ENCODE measurements at regions of chr12 and their contacts with region 1.

Region 1: GRCh38 chr12:107670999-107671643 is 14.5 kb upstream of the PWP1 start:
- DNase-seq: peak; percentile 35
- H3K4me3 ChIP-seq: no peak overlapping the region
- H3K27ac ChIP-seq: no peak overlapping the region
- H3K4me1 ChIP-seq: no peaks in the 10 kb centered on the region
- H3K27me3 ChIP-seq: peaks cover 2 to 6% of the 10 kb centered on the region in 2 experiments
- CTCF ChIP-seq: peak; percentile 72 to 88
- POLR2A ChIP-seq: no peak

Region 2: DNA sequence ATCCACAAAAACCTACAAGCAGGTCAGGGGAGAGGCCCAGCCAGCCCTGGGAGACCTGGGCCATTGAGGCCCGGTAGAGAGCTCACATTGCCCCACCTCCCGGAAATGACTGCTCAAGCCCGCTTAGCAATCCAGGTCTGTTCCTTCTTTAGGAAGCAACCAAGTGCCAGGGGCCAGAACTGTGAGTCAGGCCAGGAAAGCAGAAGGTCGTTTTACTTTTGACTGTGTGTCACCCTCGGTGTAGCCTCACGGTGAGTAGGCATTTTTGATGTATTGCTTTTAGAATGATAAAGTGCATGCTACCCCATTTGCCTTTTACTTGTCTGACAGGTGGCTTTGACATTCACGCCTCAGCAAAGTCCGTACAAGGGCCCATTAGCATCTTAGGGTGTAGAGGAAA is 10.9 kb before region 1 on chr12:
- CTCF ChIA-PET with region 1: interaction called, 16 read pairs
- POLR2A ChIA-PET with region 1: no interaction called
- dilution Hi-C with region 1: no loop called
- intact Hi-C with region 1: no loop called
- DNase-seq: no peak
- H3K4me3 ChIP-seq: no peak overlapping the region
- H3K27ac ChIP-seq: no peak overlapping the region
- H3K4me1 ChIP-seq: peaks cover 4% of the 10 kb centered on the region
- H3K27me3 ChIP-seq: no peaks in the 10 kb centered on the region
- CTCF ChIP-seq: no peak
- POLR2A ChIP-seq: no peak

Region 3: GRCh38 chr12:107685360-107686248 is 14.5 kb after region 1 on chr12 and contains the start of gene PWP1:
- CTCF ChIA-PET with region 1: interaction called, 11 read pairs
- POLR2A ChIA-PET with region 1: no interaction called
- dilution Hi-C with region 1: no loop called
- intact Hi-C with region 1: no loop called
- DNase-seq: peak; percentile 97
- H3K4me3 ChIP-seq: peak within 1 kb of the TSS; percentile 28 to 80 (median 67)
- H3K27ac ChIP-seq: peak within 1 kb of the TSS; percentile 51
- H3K4me1 ChIP-seq: peaks cover 7% of the 10 kb centered on the region
- H3K27me3 ChIP-seq: no peaks in the 10 kb centered on the region
- CTCF ChIP-seq: no peak
- POLR2A ChIP-seq: peak; percentile 74
- total RNA-seq, gene PWP1: 68.6 and 70.8 TPM in 2 replicates

Region 4: DNA sequence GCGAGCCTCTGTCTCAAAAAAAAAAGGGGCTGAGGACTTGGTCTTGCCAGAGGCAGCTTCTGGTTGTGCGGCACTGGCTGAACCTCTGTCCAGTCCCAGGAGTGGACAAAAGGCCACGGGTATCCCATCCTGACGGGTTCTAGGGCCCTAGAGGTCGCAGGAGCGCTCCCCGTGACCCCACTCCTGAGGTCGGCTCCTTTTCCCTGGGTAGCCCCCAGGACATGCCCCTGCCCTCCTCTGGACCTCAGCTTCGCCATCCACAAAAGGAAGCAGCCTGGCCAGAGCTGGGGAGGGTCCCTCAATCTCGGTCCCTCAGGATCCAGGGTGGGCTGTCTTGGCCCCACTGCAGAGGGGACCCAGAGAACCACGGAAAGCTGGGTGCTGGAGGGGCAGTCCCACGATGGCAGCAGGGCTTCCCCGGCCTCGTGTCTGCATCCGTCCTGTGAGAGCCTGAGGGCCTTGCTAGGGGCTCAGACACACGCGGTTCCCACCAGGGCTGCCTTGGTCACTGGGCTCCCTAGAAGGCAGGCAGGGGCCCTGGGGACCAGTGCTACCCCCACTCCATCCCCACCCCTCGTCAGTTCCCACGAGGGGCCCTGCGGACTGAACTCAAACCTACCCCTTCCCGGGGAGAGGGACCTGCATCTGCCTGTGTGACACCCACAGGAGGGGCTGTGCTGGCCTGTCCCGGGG is 134.5 kb after region 1 on chr12:
- CTCF ChIA-PET with region 1: no interaction called
- POLR2A ChIA-PET with region 1: no interaction called
- dilution Hi-C with region 1: no loop called
- intact Hi-C with region 1: no loop called
- DNase-seq: no peak
- H3K4me3 ChIP-seq: no peak overlapping the region
- H3K27ac ChIP-seq: no peak overlapping the region
- H3K4me1 ChIP-seq: no peaks in the 10 kb centered on the region
- H3K27me3 ChIP-seq: no peaks in the 10 kb centered on the region
- CTCF ChIP-seq: no peak
- POLR2A ChIP-seq: no peak

Region 5: GRCh38 chr12:107884769-107885694 is 213.9 kb after region 1 on chr12:
- CTCF ChIA-PET with region 1: interaction called, 336 read pairs
- POLR2A ChIA-PET with region 1: no interaction called
- dilution Hi-C with region 1: no loop called
- intact Hi-C with region 1: loop called (anchors 1 kb)
- DNase-seq: peak; percentile 54
- H3K4me3 ChIP-seq: no peak overlapping the region
- H3K27ac ChIP-seq: no peak overlapping the region
- H3K4me1 ChIP-seq: no peaks in the 10 kb centered on the region
- H3K27me3 ChIP-seq: no peaks in the 10 kb centered on the region
- CTCF ChIP-seq: peak; percentile 56 to 74
- POLR2A ChIP-seq: no peak

Region 6: DNA sequence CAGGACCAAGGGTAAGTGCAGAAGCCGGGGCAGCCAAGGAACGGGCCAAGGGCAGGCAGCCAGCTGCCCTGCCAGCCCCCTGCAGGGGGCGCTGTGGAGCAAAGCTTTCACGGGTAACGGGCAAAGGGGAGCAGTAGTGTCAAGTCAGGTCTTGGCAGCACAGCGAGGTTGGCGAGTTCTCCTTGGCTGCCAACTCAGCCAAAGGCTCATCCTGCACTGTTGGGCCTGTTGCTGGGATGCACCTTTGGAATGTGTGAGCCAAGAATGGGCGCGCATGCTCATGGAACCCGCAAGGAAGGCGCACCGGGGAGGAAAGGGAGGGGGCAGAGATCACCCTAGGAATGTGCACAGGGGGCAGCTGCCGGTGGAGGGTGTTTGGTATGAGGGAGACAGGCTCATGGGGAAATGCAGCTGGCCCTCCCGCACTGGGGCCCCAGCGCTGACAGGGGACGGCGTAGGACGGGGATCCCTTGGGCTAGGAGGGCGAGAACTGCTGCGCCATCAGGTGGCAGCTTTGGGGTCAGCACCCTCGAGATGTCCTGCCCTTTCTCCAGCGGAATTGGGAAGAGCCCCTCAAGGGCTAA is 241.4 kb after region 1 on chr12:
- CTCF ChIA-PET with region 1: interaction called, 3 read pairs
- POLR2A ChIA-PET with region 1: no interaction called
- dilution Hi-C with region 1: no loop called
- intact Hi-C with region 1: loop called (anchors 1 kb)
- DNase-seq: peak; percentile 30
- H3K4me3 ChIP-seq: no peak overlapping the region
- H3K27ac ChIP-seq: no peak overlapping the region
- H3K4me1 ChIP-seq: no peaks in the 10 kb centered on the region
- H3K27me3 ChIP-seq: no peaks in the 10 kb centered on the region
- CTCF ChIP-seq: peak; percentile 82 to 86
- POLR2A ChIP-seq: no peak